Heart right ventricle (tissue), 16 donors: ENCODE measurements at regions of chr11 and their contacts with region 1.

Region 1: DNA sequence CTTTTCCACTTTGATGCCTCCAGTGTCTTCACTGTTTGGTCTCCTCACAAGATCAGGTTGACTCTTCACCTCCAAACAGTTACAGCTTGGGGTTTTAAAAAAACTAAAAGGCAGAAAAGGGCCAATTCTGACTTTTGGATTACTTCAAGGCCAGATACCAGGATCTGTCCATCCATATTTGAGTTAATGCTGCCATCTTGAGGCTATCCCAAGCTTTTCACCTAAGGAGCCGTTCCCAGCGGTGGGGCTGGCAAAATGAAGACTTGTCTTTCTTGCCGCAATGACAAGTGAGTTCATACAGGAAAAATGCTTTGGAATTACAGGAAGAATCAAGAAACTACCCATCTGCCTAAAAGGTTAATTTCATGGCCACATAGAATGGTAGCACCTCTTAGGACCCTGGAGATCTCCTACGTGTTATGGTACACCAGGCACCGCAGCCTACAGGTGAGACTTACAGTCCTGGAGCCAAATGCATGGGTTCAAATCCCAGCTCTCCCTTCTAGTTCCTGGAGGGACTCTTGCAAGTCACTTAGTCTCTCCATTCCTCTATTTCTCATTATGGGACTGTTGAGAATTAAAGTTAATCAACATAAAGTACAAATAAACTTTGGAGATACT is 6.0 kb upstream of the OR5B21 start:
- DNase-seq: peak in 1 of 2 donors; percentile 24
- ATAC-seq: peak in 7 of 8 donors; percentile 63 to 82 (median 68)
- H3K4me3 ChIP-seq: no peak overlapping the region
- H3K27ac ChIP-seq: no peak overlapping the region
- H3K4me1 ChIP-seq: peaks cover 0 to 3% (median 0%) of the 10 kb centered on the region in 9 donors
- H3K27me3 ChIP-seq: peaks cover 0 to 19% (median 3%) of the 10 kb centered on the region in 7 donors
- CTCF ChIP-seq: peak; percentile 39 to 76 (median 67)

Region 2: GRCh38 chr11:57456960-57457642 is 1056.8 kb before region 1 on chr11:
- intact Hi-C with region 1: loop called in 4 of 10 experiments (anchors 5 to 10 kb)
- DNase-seq: peak; percentile 89 to 90
- ATAC-seq: peak; percentile 85 to 92 (median 87)
- H3K4me3 ChIP-seq: peak overlapping the region in 1 of 10 donors; percentile 16
- H3K27ac ChIP-seq: no peak overlapping the region
- H3K4me1 ChIP-seq: peaks cover 4 to 42% (median 35%) of the 10 kb centered on the region in 9 donors
- H3K27me3 ChIP-seq: peaks cover 13 to 52% (median 44%) of the 10 kb centered on the region in 7 donors
- CTCF ChIP-seq: peak; percentile 99

Region 3: GRCh38 chr11:57644748-57645688 is 868.8 kb before region 1 on chr11:
- intact Hi-C with region 1: loop called in 1 of 10 experiments (anchors 10 kb)
- DNase-seq: peak; percentile 76 to 86
- ATAC-seq: peak; percentile 75 to 81 (median 77)
- H3K4me3 ChIP-seq: no peak overlapping the region
- H3K27ac ChIP-seq: peak overlapping the region in 9 of 10 donors; percentile 11 to 68 (median 47)
- H3K4me1 ChIP-seq: peaks cover 3 to 80% (median 56%) of the 10 kb centered on the region in 9 donors
- H3K27me3 ChIP-seq: peaks cover 0 to 55% (median 37%) of the 10 kb centered on the region in 7 donors
- CTCF ChIP-seq: peak; percentile 72 to 92 (median 88)

Region 4: DNA sequence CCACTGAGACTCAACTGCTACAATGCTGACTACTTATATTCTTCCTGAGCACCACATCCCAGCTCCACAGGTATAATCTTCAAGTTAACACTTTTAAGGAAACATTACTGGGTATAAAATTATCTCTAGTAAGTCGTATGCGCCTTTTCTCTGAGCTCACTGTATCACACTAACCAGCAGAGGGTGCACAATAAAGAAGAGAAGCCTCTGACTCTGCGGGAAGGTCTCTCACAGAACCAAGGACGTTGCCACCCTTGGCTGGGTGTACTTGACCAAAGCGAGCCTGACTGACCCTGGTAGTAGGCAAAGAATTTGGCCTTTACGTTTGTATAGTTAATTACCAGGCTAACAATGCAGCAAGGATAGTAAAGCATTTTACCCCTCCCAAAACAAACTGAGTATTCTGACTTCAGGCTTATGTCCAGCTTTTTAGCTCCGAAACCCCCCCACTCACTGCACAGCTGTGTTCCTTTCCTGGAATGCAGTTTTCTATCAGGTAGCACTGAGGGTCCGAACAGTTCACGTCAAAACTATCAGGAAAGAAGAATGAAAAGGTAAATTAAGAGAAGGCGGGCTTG is 762.1 kb before region 1 on chr11 and contains the start of gene BTBD18:
- intact Hi-C with region 1: loop called in 3 of 10 experiments (anchors 5 to 10 kb)
- DNase-seq: peak in 1 of 2 donors; percentile 23
- ATAC-seq: peak; percentile 61 to 89 (median 85)
- H3K4me3 ChIP-seq: no peak within 1 kb of the TSS
- H3K27ac ChIP-seq: peak within 1 kb of the TSS in 4 of 10 donors; percentile 7 to 61 (median 55)
- H3K4me1 ChIP-seq: peaks cover 0 to 10% (median 6%) of the 10 kb centered on the region in 9 donors
- H3K27me3 ChIP-seq: no peaks in the 10 kb centered on the region
- CTCF ChIP-seq: peak; percentile 29 to 65 (median 59)
- total RNA-seq, gene BTBD18: not detected

Region 5: GRCh38 chr11:57815476-57815875 is 698.4 kb before region 1 on chr11:
- intact Hi-C with region 1: loop called in 2 of 10 experiments (anchors 10 kb)
- DNase-seq: no peak
- ATAC-seq: no peak
- H3K4me3 ChIP-seq: no peak overlapping the region
- H3K27ac ChIP-seq: peak overlapping the region in 1 of 10 donors; percentile 15
- H3K4me1 ChIP-seq: no peaks in the 10 kb centered on the region
- H3K27me3 ChIP-seq: no peaks in the 10 kb centered on the region
- CTCF ChIP-seq: no peak

Region 6: DNA sequence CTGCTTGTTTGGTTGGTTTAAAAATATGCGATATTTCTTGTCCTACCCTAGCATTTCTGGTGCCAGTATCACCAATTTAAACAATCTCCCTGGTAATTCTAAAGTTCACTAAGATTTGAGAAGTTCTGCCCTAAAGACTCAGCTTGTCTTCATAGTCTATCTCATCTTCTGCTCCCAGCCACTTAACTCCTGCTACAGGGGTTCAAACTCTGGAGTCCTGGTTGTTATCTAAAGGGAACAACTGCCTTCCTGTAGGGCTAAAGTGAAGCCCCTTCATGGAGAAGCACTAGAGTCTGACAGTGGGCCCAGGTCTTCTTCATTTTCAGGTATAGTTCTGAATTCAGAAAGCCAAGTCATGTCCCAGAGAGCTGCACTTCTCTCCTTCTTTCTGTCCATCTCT is 679.0 kb before region 1 on chr11:
- intact Hi-C with region 1: loop called in 2 of 10 experiments (anchors 10 kb)
- DNase-seq: no peak
- ATAC-seq: no peak
- H3K4me3 ChIP-seq: no peak overlapping the region
- H3K27ac ChIP-seq: no peak overlapping the region
- H3K4me1 ChIP-seq: no peaks in the 10 kb centered on the region
- H3K27me3 ChIP-seq: peaks cover 0 to 8% (median 0%) of the 10 kb centered on the region in 7 donors
- CTCF ChIP-seq: no peak

Region 7: GRCh38 chr11:58142761-58143160 is 371.1 kb before region 1 on chr11:
- intact Hi-C with region 1: no loop called
- DNase-seq: no peak
- ATAC-seq: no peak
- H3K4me3 ChIP-seq: no peak overlapping the region
- H3K27ac ChIP-seq: no peak overlapping the region
- H3K4me1 ChIP-seq: no peaks in the 10 kb centered on the region
- H3K27me3 ChIP-seq: no peaks in the 10 kb centered on the region
- CTCF ChIP-seq: no peak

Region 8: DNA sequence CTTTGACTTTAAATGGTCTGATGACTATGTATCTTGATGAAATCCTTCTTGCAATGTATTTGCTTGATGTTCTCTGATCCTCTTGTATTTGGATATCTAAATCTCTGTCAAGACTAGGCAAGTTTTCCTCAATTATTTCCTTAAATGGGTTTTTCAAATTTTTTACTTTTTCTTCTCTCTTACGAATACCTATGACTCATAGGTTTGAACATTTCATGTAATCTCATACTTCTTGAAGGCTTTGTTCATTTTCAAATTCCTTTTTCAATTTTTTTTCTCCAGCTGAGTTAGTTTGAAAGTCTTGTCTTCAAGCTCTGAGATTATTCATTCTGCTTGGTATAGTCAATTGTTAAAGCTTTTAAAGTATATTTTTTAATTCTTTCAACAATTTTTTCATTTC is 258.9 kb before region 1 on chr11:
- intact Hi-C with region 1: no loop called
- DNase-seq: no peak
- ATAC-seq: no peak
- H3K4me3 ChIP-seq: no peak overlapping the region
- H3K27ac ChIP-seq: no peak overlapping the region
- H3K4me1 ChIP-seq: no peaks in the 10 kb centered on the region
- H3K27me3 ChIP-seq: no peaks in the 10 kb centered on the region
- CTCF ChIP-seq: no peak